ENCODE measurements at regions of chr2 and their contacts with region 1.

Region 1: DNA sequence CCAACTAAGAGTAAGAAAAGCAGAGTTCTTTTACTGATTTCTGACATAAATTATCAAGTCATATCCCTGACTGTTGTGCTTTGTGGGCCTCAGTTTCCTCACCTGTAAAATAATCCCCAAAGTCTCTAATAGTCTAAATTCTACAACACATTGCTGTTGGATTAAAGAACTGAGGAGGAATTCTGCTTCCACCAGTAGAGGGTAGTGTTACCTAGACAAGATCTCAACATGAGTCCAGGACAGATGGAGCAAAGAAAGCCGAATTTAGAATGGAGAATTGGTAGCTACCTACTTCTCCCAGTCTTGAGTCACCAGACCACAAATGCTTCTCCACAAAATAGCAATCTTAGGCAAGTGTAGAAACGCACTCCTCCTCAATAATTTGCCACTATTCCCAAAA is 462.5 kb upstream of the FSHR start:
- DNase-seq: peak; percentile 4
- H3K4me3 Mint-ChIP-seq: no peak overlapping the region
- H3K27ac Mint-ChIP-seq: no peak overlapping the region
- H3K4me1 Mint-ChIP-seq: no peaks in the 10 kb centered on the region
- H3K27me3 Mint-ChIP-seq: peaks cover 7% of the 10 kb centered on the region
- CTCF ChIP-seq: no peak

Region 2: GRCh38 chr2:50492477-50492851 is 875.7 kb after region 1 on chr2:
- CTCF ChIA-PET with region 1: no interaction called
- intact Hi-C with region 1: loop called (anchors 2 kb)
- DNase-seq: peak; percentile 35
- H3K4me3 Mint-ChIP-seq: no peak overlapping the region
- H3K27ac Mint-ChIP-seq: no peak overlapping the region
- H3K4me1 Mint-ChIP-seq: no peaks in the 10 kb centered on the region
- H3K27me3 Mint-ChIP-seq: peaks cover 50% of the 10 kb centered on the region
- CTCF ChIP-seq: peak; percentile 31